GM10248 (cell line): ENCODE measurements at regions of chr14 and their contacts with region 1.

Region 1: DNA sequence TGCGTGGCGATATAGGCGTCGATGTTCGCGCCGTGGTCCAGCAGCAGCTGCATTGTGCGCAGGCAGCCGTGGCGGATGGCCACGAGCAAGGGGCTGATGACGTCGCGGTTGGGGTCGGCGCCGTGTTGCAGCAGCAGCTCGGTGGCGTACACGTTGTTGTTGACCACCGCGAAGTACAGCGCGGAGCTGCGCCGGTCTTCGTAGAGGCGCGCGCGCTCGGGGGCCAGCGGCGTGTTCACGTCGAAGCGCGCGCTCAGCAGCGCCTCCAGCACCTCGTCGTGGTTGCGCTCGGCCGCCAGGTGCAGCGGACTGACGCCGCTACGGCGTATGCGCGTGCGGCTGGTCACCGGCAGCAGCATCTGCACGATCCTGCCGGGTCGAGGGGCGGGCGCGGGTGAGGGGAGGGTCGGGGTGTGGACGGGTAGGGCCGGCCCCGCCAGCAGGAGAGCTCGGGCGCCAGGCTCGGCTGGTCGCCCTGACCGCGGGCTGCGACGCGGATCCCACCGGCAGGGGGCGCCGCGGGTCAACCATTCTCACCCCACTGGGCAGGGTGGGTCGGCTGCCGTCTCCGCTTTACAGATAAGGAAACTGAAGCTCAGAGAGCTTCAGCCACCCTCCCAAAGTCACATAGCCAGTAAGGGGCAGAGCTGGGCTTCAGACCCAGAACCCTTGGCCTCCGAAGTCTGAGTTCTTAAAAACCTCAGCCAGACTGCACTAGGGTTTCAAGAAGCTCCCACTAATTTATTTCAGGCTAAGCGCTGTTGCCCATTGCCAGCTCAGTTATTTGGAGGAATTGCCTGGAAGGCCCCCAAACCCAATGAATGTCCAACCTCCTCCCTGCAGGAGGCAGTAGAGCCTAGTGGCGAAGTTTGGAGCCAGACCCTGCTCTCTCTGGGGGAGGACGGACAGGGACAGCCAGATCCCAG is 12.4 kb downstream of the FAM181A start:
- DNase-seq: peak; percentile 91
- CTCF ChIP-seq: peak; percentile 94

Region 2: DNA sequence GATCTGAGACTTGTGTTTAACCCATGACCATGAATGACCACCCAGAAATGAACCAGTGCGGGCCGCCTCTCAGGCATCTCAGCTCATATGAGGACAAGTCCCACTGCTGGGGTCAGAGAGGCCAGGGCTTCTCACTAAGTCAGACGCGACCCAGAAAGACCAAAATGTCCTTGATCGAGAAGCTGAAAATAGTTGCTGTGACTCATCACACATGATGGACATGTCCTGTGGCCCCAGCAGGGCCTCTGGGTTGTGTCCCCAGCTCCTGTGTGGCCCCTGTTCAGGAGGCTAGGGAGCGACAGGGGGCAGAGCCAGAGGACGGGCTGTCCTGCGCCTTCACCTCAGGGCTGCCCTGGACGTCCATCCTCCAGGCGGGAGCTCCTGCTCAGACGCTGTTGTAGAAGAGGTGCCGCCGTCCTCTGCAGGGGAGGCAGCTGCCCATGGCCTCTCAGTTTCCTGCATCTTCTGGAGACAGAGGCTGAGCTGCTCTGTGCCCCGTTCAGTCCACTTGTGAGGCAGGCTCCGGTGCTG is 41.4 kb before region 1 on chr14:
- CTCF ChIA-PET with region 1: interaction called, 13 read pairs
- POLR2A ChIA-PET with region 1: no interaction called
- DNase-seq: no peak
- CTCF ChIP-seq: no peak

Region 3: GRCh38 chr14:93953263-93953662 is 13.7 kb after region 1 on chr14:
- CTCF ChIA-PET with region 1: interaction called, 156 read pairs
- POLR2A ChIA-PET with region 1: interaction called, 3 read pairs
- DNase-seq: no peak
- CTCF ChIP-seq: peak; percentile 37

Region 4: GRCh38 chr14:93970549-93970946 is 31.0 kb after region 1 on chr14:
- CTCF ChIA-PET with region 1: interaction called, 212 read pairs
- POLR2A ChIA-PET with region 1: interaction called, 4 read pairs
- DNase-seq: no peak
- CTCF ChIP-seq: peak; percentile 69

Region 5: DNA sequence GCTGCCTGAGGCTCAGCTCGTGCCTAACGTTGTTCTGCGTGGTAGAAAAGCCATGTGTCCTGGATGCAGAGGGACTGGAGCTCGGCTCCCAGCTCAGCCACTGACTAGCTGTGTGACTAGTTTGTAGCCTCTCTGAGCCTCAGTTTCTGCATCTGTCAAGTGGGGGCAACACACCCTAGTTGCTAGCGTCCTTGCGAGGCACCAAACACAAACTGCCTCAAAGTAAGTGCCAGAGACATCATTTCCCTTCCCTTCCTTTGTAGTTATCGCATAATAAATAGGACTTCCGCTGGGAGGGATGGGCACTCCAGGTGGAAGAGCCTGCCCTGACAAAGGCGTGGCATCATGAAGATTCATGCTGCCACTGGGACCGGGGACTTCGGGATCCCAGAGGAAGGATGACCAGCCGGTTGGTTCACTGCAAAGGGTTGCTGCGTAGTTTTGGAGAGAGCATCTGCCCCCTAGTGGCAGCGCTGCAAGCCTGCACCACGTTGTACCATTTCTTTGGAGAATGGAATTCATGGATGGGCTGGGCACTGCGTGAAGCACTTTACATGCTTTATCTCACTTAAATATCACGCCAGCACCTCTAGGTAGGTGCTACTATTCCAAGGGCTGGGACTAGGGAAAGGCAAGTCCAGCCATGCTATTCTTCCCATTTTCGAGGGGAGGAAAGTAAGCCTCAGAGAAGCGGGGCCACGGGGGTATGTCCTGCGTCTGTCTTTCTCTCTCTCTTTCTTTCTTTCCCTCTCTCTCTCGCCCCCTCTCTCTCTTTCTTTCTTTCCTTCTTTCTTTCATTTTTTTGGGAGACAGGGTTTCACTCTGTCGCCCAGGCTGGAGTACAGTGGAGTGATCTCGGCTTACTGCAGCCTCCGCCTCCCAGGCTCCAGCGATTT is 62.2 kb after region 1 on chr14:
- CTCF ChIA-PET with region 1: interaction called, 664 read pairs
- POLR2A ChIA-PET with region 1: interaction called, 5 read pairs
- DNase-seq: peak; percentile 82
- CTCF ChIP-seq: peak; percentile 97

Region 6: DNA sequence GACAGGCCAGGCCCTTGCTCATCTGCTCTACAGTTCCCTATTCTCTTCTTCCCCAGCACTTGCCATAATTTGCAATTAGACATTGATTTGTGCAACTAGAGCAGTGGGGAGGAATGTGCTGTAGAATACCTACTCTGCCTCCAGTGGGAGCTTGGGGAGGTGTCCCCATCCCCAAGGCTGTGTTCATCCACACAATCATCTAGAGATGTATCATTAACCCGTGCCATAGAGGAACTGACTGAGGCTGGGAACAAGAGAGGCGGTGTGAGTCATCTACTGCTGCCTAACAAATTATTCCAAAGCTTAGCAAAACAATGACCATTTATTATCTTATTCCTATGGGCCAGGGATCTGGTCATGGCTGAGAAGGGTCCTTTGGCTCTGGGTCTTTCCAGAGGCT is 81.4 kb after region 1 on chr14:
- CTCF ChIA-PET with region 1: interaction called, 31 read pairs
- POLR2A ChIA-PET with region 1: no interaction called
- DNase-seq: no peak
- CTCF ChIP-seq: no peak

Region 7: DNA sequence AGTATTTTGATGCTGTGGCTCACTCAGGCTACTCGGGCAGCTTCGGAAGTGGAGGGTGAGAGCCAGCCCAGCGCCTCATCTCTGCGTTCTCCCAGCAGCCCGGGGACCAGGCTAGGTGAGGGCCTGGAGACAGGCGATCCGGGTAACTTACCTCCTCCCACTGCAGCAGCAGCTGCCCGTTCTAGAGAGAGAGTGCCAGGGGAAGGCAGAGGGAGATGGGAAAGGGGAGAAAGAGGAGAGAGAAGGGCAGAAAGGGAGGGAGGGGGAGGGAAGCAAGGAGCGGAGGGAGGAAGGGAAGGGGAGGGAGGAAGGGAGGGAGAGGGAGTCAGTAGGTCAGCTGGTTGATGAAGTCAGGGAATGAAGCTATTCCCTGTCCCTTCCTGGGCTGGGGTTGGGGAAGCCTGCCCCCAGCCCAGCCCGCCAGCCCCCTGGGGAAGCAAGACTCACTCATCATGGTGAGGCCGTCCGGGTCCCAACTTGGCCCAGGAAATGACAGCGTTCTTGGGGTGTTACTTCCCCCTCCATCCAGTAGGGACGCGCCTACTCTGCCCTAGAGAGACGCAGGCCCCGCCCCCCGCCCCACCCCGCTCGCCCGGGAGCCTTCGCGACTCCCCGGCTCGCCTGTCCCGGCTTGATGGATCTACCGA is 189.7 kb after region 1 on chr14 and contains the start of gene IFI27L2:
- CTCF ChIA-PET with region 1: interaction called, 12 read pairs
- POLR2A ChIA-PET with region 1: no interaction called
- DNase-seq: peak; percentile 95
- CTCF ChIP-seq: peak; percentile 2